Activated CD4-positive, alpha-beta T cell treated with anti-CD3 and anti-CD28 coated beads, Interleukin-2, amount 10 ng/mL, durations not matched to agents 24 days and 14 days (primary cell): ENCODE measurements at regions of chr1 and their contacts with region 1.

Region 1: GRCh38 chr1:211514030-211514754 is 22.2 kb upstream of the RD3 start:
- DNase-seq: peak; percentile 91
- H3K4me3 Mint-ChIP-seq: peak overlapping the region; percentile 76
- H3K27ac Mint-ChIP-seq: peak overlapping the region; percentile 69
- H3K4me1 Mint-ChIP-seq: peaks cover 24% of the 10 kb centered on the region
- H3K27me3 Mint-ChIP-seq: peaks cover 12% of the 10 kb centered on the region

Region 2: DNA sequence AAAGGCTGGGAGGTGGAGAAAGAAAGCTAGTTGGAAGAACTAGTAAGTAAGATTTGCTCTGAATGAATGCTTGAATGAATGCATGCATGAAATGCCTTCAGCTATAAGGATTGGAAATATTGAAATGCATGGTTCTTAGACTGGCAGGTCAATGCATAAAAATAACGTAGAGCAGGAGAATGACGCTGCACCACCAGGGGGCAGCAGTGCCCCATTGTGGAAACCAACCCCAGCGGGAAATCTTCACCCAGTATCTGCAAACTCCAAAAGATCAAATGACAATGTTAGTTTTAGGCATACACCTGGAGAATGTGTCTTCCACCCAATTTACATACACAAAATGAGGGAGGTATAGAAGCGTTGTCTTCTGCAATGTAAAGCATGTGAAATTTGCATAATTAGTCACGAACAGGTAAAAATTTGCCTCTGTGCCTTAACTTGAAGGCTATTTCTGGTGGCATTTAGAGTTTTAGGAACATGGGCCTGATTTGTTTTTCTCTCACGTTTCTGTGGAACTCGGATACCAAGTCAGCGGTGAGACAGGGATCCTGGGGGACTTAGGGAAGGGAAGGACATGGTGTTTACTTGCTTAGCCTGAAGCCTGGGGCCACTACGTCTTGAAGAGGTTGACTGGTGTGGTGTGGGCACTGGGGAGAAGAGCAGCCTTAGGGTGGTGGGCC is 1106.8 kb before region 1 on chr1:
- intact Hi-C with region 1: loop called (anchors 5 kb)
- DNase-seq: peak; percentile 91
- H3K4me3 Mint-ChIP-seq: no peak overlapping the region
- H3K27ac Mint-ChIP-seq: no peak overlapping the region
- H3K4me1 Mint-ChIP-seq: no peaks in the 10 kb centered on the region
- H3K27me3 Mint-ChIP-seq: peaks cover 10% of the 10 kb centered on the region

Region 3: DNA sequence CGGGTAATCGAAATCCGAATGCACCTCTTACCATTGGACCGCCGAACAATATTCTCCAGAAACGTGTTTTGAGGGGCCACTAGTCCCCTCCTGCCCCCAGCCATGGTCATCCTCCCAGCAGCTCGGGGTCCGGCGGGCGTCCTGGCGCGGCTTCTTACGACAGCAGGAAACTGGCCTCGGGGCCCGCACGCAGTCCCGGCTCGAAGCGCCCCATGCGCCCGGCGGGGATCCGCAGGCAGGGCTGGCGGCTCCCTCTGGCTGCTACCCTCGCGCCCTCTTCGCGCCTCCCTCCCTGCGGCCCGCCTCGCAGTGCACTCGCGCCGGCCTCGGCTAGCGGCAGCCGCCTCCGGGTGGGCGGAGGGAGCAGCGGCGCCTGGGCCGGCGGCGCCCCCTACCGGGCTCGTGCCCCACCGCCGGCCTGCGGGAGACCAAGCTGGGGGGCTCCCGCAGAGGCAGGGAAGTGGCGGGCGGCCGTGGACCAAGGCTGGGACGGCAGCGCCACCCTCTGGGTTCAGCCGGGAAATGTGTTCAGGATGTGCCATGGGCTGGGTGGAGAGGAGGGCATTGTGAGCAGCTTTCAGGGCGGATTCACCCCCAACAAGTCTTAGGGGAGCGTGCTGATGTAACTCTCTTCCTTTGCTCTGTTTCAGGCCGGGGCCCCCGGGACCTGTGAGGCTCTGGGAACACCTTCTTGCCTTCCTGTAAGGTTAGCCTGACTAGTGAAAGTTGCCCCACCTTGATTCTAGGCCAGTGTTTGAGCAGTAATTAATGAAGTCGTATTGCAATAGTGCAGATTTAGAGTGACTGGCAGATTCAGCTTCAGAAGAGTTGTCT is 380.1 kb before region 1 on chr1 and contains the start of gene KCNH1:
- intact Hi-C with region 1: loop called (anchors 10 kb)
- DNase-seq: peak; percentile 91
- H3K4me3 Mint-ChIP-seq: peak within 1 kb of the TSS; percentile 71
- H3K27ac Mint-ChIP-seq: no peak within 1 kb of the TSS
- H3K4me1 Mint-ChIP-seq: peaks cover 2% of the 10 kb centered on the region
- H3K27me3 Mint-ChIP-seq: peaks cover 75% of the 10 kb centered on the region
- total RNA-seq, gene KCNH1: not detected in 2 replicates

Region 4: GRCh38 chr1:211174375-211174774 is 339.8 kb before region 1 on chr1:
- intact Hi-C with region 1: no loop called
- DNase-seq: no peak
- H3K4me3 Mint-ChIP-seq: no peak overlapping the region
- H3K27ac Mint-ChIP-seq: no peak overlapping the region
- H3K4me1 Mint-ChIP-seq: no peaks in the 10 kb centered on the region
- H3K27me3 Mint-ChIP-seq: peaks cover 15% of the 10 kb centered on the region

Region 5: DNA sequence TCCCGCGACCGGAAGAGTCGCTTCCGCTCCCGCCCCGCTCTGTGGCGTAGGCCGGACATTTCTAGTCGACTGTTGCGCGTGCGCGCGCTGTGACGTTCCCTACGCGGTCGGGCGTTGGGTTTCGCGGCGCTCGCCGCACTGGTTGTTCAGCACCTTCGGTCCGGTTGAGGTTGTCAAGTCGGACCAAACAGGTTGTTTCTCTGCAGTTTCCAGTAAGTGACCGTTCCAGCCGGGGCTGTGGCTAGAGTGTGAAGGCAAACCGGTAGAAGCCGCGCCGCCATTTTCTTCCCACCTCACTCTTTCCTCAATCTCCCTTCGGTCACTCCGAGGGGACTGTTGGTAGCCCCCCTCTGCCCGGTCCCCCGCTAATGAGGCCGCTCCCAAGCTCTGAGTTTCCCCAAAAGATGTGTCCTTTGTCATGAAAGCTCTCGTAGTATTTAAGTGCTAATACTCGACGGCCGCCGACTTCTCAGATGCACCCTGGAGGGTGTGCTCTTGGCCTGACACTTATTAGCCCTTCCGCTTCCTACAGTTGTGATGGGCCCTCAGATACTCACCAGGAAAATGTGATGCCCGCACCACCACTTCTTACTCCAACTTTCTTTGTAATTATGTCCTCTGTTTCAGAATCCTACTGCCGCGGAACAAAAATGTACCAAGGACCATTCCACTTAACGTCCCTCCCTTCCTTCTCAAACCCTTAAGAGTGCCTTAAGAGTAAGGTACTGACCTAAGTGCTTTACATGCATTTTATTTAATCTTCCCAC is 131.3 kb before region 1 on chr1:
- intact Hi-C with region 1: loop called (anchors 2 kb)
- DNase-seq: peak; percentile 95
- H3K4me3 Mint-ChIP-seq: peak overlapping the region; percentile 80
- H3K27ac Mint-ChIP-seq: peak overlapping the region; percentile 93
- H3K4me1 Mint-ChIP-seq: peaks cover 43% of the 10 kb centered on the region
- H3K27me3 Mint-ChIP-seq: peaks cover 6% of the 10 kb centered on the region

Region 6: DNA sequence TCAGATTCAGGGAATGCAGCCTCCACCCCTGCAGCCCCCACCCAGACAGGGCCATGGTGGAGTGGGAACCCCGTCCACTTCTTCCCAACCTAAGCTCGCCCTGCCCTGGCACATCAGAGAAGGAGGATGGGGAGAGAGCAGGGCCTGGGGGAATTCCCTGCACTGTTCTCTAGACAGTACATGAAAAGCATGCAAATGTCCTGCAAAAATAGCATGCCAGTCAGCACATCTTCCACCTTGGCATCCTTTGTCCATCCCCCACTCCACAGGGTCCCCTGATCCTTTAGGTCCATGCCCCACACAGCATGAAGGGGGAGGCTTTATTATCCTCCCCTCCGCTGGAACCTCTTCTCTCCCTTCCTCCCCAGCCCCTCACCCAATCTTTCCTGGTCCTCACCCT is 12.8 kb after region 1 on chr1:
- intact Hi-C with region 1: no loop called
- DNase-seq: no peak
- H3K4me3 Mint-ChIP-seq: no peak overlapping the region
- H3K27ac Mint-ChIP-seq: no peak overlapping the region
- H3K4me1 Mint-ChIP-seq: peaks cover 22% of the 10 kb centered on the region
- H3K27me3 Mint-ChIP-seq: no peaks in the 10 kb centered on the region

Region 7: DNA sequence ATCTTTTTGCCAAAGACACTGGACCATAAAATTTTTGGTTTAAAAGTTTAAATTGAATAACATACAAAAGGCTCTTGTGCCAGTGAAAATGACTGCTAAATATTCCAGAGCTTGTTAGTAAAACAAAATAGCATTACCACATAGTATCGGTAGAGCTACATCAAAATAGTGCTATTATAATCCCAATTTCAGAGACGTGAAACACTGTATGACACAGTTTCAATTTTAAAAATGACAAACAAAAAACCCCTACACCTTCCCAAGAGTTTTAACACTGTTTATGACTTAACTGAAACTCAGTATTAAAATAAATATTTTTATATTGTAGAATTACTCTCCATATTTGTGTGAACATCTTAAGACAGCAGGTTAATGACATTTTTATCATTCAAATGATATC is 57.8 kb after region 1 on chr1:
- intact Hi-C with region 1: loop called (anchors 2 kb)
- DNase-seq: no peak
- H3K4me3 Mint-ChIP-seq: no peak overlapping the region
- H3K27ac Mint-ChIP-seq: no peak overlapping the region
- H3K4me1 Mint-ChIP-seq: peaks cover 35% of the 10 kb centered on the region
- H3K27me3 Mint-ChIP-seq: peaks cover 3% of the 10 kb centered on the region

Region 8: DNA sequence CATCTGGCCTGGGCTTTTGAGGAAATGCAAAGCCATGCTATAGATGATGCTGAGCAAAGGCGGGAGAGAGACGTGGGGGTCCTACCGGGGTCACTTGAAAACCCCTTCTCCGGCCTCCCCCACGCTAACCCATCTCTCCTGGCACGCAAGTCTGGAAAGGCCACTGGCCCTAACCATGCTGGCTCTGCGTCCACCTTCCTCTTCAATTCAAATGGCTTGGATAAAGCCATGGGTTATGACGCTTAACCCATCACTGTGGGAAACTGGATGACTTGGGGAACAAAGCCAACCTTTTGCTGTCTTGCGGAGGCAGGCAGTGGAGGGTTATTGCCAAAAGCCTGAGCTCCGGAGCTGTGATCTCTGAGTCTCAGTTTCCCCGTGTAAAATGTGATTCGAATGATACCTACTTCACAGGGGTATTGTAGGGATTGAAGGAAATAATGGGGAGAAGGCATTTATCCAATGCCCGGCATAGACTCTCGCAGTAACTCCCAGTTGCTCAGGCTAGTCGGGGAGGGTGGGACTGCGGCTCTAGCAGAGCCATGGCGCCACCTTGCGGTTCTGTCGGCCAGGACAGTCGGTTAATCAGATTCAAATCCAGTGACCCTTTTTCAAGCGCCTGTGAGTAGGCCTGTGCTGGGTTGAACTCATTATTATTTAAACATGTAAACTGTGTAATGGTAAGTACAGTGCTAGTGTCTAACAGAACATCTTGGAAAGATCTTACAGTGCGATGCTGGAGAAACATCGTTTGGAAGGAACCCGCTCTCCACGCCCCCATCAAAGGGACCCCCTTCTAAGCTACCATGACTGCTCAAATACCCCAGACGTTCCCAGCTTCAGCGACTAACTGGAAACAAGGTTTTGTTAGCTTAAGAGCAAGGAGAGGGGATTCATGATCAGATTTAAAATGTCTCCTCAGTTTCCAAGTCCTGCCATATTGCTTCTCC is 140.9 kb after region 1 on chr1:
- intact Hi-C with region 1: loop called (anchors 1 kb)
- DNase-seq: peak; percentile 94
- H3K4me3 Mint-ChIP-seq: no peak overlapping the region
- H3K27ac Mint-ChIP-seq: no peak overlapping the region
- H3K4me1 Mint-ChIP-seq: peaks cover 6% of the 10 kb centered on the region
- H3K27me3 Mint-ChIP-seq: peaks cover 10% of the 10 kb centered on the region

Region 9: DNA sequence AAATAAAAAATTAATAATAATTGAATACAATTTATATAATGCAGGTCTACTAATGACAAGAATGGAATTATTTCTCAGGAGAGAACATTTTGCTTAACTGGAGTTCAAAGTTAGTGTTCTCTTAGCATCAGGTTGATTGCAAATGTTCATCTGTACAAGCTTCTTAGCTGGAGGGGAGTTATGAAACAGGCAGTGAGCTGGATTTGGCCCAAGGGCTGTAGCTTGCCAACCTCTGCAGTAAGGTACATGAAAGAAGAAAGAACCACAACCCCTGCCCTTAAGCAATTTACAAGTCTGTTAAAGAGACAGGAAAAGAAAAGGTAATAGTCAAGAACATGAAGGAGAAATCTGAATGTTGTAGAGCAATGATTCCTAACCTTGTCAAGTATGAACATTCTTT is 299.4 kb after region 1 on chr1:
- intact Hi-C with region 1: no loop called
- DNase-seq: no peak
- H3K4me3 Mint-ChIP-seq: no peak overlapping the region
- H3K27ac Mint-ChIP-seq: no peak overlapping the region
- H3K4me1 Mint-ChIP-seq: peaks cover 1% of the 10 kb centered on the region
- H3K27me3 Mint-ChIP-seq: no peaks in the 10 kb centered on the region